ENCODE measurements at regions of chr15 and their contacts with region 1.

Region 1: DNA sequence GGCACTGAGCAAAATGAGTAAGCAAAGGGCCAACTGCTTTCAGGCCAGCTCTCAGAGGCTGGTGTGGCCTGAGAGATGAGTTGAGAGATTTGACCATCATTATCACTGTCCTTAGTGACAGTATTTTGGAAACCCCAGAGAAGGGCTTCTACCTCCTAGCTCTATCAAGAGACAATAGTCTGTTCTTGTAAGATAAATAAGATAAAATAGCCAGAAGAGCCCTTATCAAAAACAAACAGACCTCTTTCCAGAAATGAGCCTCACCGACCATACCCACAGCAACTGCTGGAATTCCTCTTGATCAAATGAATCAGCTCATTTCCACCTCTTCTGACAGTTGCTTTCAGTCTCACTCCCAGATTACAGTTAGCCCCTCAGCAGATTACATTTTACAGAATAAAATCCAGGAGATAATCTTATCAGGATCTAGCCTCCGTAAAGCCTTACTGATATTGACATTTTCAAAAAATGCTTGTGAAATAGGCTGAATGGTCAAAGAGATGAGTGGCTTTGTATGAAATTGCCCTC is 4.5 kb downstream of the HDC start:
- DNase-seq: no peak
- H3K4me3 Mint-ChIP-seq: peak overlapping the region; percentile 2
- H3K27ac Mint-ChIP-seq: peak overlapping the region; percentile 90
- H3K4me1 Mint-ChIP-seq: peaks cover 79% of the 10 kb centered on the region
- H3K27me3 Mint-ChIP-seq: no peaks in the 10 kb centered on the region

Region 2: DNA sequence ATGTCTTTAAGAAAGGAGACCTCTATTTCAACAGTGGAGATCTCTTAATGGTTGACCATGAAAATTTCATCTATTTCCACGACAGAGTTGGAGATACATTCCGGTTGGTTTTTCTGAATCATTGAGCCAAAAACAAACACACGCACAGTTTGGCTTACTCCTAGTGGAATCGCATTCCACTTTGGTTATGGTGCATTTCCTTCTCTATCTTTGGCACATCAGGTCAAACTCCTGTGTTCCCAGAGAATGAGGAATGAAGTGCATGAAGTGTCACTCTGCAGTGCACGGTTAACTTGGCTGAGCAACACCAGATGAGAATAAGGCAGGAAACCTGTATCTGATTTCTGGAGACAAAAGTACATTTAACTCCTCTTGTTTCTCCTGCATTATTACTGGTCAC is 34.0 kb before region 1 on chr15:
- CTCF ChIA-PET with region 1: no interaction called
- POLR2A ChIA-PET with region 1: no interaction called
- DNase-seq: no peak
- H3K4me3 Mint-ChIP-seq: no peak overlapping the region
- H3K27ac Mint-ChIP-seq: no peak overlapping the region
- H3K4me1 Mint-ChIP-seq: no peaks in the 10 kb centered on the region
- H3K27me3 Mint-ChIP-seq: no peaks in the 10 kb centered on the region

Region 3: GRCh38 chr15:50241684-50242450 is 19.2 kb before region 1 on chr15:
- CTCF ChIA-PET with region 1: interaction called, 3 read pairs
- POLR2A ChIA-PET with region 1: interaction called, 74 read pairs
- DNase-seq: peak; percentile 23
- H3K4me3 Mint-ChIP-seq: no peak overlapping the region
- H3K27ac Mint-ChIP-seq: peak overlapping the region; percentile 47
- H3K4me1 Mint-ChIP-seq: peaks cover 27% of the 10 kb centered on the region
- H3K27me3 Mint-ChIP-seq: no peaks in the 10 kb centered on the region

Region 4: DNA sequence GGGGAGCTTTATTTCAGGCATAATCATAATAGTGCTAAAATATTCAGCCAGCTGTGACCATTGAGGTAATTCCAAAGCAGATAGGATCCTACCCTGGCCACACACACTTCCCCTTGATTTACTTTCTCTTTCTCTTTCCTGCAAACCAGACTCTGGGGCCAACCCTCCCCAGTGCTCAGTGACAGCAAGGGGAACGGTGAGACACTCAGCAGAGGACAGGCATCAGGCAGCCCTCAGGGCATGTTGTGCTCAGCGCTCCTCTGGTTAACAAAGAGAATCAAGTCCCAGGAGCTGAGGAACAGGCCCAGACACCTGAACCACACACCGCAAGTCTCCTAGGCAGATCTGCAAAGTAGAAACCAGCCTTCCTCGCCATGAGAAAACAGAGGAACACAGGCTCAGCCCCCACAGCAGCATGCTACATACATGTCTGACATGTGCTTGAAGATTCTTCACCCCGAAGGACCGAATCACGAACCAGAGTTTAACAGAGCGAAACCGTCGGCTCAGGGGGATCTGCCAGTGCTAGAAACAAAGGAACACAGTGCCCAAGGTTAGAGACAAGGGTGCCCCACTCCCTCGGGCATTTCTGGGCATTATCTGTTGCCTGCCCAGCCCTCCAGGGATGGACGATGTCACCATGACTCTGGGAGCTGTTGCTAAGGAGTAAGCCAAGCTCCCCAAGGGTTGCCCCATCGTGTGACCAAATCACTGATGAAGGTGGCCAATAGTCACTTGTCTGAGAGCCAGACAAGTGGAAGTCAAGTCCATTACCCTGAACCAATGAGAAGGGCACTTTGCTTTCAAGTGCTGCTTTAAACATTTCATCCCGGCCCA is 13.0 kb before region 1 on chr15:
- CTCF ChIA-PET with region 1: interaction called, 5 read pairs
- POLR2A ChIA-PET with region 1: interaction called, 74 read pairs
- DNase-seq: peak; percentile 79
- H3K4me3 Mint-ChIP-seq: peak overlapping the region; percentile 66
- H3K27ac Mint-ChIP-seq: peak overlapping the region; percentile 90
- H3K4me1 Mint-ChIP-seq: peaks cover 51% of the 10 kb centered on the region
- H3K27me3 Mint-ChIP-seq: no peaks in the 10 kb centered on the region

Region 5: GRCh38 chr15:50315814-50316630 is 55.0 kb after region 1 on chr15:
- CTCF ChIA-PET with region 1: interaction called, 10 read pairs
- POLR2A ChIA-PET with region 1: interaction called, 6 read pairs
- DNase-seq: no peak
- H3K4me3 Mint-ChIP-seq: no peak overlapping the region
- H3K27ac Mint-ChIP-seq: no peak overlapping the region
- H3K4me1 Mint-ChIP-seq: peaks cover 29% of the 10 kb centered on the region
- H3K27me3 Mint-ChIP-seq: no peaks in the 10 kb centered on the region